ENCODE measurements at regions of chr7 and their contacts with region 1.

Region 1: DNA sequence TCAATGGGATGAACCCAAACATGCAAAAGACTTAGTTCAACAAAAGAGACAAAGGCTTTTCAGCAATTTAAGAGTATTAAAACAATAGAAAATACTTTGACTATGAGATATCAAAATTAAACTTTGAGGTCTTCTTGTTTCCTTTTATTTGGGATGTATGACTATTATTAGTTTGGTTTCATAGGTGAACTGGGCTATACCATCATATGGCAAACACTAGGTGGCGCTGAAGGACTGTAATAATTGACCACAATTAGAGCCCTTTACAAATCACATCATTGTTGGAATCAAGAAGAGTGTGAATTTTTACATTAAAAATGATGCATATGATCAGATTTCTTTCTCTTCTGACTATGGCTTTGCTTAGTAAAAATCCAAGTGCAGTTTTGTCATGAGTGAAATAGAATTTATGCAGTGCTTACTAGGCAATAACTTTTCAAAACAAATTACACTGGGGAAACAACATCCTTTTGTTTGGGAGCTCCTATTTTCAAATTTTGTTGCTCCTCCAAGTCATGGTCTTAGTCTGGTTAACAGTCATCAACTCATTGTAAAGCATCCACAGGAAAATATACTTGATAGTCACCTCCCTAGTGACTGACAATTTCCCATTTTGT is 14.7 kb upstream of the NXPH1 start:
- DNase-seq: no peak
- ATAC-seq: peak in 1 of 2 donors; percentile 56
- H3K4me3 ChIP-seq: no peak overlapping the region
- H3K27ac ChIP-seq: no peak overlapping the region
- H3K4me1 ChIP-seq: no peaks in the 10 kb centered on the region
- H3K27me3 ChIP-seq: no peaks in the 10 kb centered on the region
- CTCF ChIP-seq: peak; percentile 29 to 69 (median 33)
- POLR2A ChIP-seq: no peak

Region 2: GRCh38 chr7:10412422-10413019 is 1993.8 kb after region 1 on chr7:
- in situ Hi-C with region 1: loop called in 2 of 4 experiments (anchors 10 to 25 kb)
- intact Hi-C with region 1: loop called (anchors 5 kb)
- DNase-seq: no peak
- ATAC-seq: no peak
- H3K4me3 ChIP-seq: no peak overlapping the region
- H3K27ac ChIP-seq: no peak overlapping the region
- H3K4me1 ChIP-seq: no peaks in the 10 kb centered on the region
- H3K27me3 ChIP-seq: no peaks in the 10 kb centered on the region
- CTCF ChIP-seq: peak in 2 of 5 experiments; percentile 47 to 49
- POLR2A ChIP-seq: no peak

Measured in gastrocnemius medialis (tissue), 4 donors.